ENCODE measurements at regions of chr1 and their contacts with region 1.

Region 1: DNA sequence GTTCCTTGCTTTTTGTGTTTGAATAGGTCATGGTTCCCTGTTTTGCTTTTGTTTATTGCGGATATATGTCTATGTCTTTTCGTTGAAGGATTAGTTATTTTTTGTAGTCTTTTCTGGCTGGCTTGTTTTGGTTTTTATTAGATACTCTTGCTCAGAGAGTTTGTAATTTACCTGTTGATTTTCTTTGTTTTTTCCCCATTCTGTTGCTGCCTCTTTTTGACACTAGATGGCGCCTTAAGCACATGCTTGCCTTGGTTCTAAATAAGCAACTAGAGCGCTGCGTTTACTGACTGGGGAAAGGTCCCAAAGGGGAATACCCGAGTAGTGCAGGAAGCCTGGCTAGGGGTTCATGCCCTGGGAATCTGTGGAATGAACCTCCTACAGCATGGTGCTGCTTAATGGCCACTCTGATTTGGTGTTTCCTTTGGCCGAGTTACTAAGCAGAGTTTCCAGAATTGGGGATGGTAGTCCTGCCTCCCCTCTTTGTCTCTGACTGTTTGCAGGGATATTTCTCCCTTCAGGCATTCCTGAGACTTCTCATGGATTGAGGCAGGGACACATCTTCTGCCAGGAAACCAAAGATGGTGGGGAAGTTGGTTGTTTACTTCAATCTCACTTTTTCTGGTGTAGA is 143.2 kb downstream of the PTPRU start:
- DNase-seq: no peak
- H3K4me3 ChIP-seq: no peak overlapping the region
- CTCF ChIP-seq: no peak
- POLR2A ChIP-seq: no peak

Region 2: GRCh38 chr1:28306301-28306954 is 1073.1 kb before region 1 on chr1:
- intact Hi-C with region 1: no loop called
- DNase-seq: no peak
- H3K4me3 ChIP-seq: no peak overlapping the region
- CTCF ChIP-seq: no peak
- POLR2A ChIP-seq: no peak

Region 3: GRCh38 chr1:28449904-28450303 is 929.7 kb before region 1 on chr1:
- intact Hi-C with region 1: loop called (anchors 10 kb)
- DNase-seq: no peak
- H3K4me3 ChIP-seq: no peak overlapping the region
- CTCF ChIP-seq: no peak
- POLR2A ChIP-seq: no peak

Region 4: DNA sequence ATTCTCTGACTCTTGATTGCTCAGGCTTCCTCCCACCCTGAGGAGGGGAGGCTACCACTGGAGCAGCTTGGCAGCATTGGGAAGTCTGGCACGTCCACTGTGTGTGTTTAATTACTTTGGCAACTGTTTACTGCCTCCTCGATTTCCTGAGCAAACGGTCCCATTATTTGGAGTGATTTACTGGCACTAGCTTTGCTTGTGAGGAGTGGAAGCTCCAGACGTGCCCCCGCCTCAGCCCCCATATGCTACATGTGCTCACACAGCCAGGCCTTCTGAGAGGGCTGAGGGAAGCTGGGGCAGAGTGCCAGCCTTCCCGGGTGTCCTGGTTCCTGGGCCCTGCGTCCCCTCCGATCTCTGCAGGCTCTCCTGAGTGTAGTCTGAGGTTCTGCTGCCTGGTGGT is 163.0 kb after region 1 on chr1:
- intact Hi-C with region 1: no loop called
- DNase-seq: peak in 1 of 2 donors; percentile 52
- H3K4me3 ChIP-seq: no peak overlapping the region
- CTCF ChIP-seq: no peak
- POLR2A ChIP-seq: no peak